Naive thymus-derived CD8-positive, alpha-beta T cell (primary cell): ENCODE measurements at regions of chr3 and their contacts with region 1.

Region 1: GRCh38 chr3:128617557-128618397 is 32.8 kb downstream of the RPN1 start:
- DNase-seq: peak; percentile 97 to 99 (median 99)
- ATAC-seq: peak; percentile 89 to 91
- H3K4me3 Mint-ChIP-seq: peak overlapping the region; percentile 94 to 99 (median 97)
- H3K27ac Mint-ChIP-seq: peak overlapping the region; percentile 93 to 99 (median 97)
- H3K4me1 Mint-ChIP-seq: peaks cover 13 to 32% (median 27%) of the 10 kb centered on the region in 4 donors
- H3K27me3 Mint-ChIP-seq: no peaks in the 10 kb centered on the region

Region 2: DNA sequence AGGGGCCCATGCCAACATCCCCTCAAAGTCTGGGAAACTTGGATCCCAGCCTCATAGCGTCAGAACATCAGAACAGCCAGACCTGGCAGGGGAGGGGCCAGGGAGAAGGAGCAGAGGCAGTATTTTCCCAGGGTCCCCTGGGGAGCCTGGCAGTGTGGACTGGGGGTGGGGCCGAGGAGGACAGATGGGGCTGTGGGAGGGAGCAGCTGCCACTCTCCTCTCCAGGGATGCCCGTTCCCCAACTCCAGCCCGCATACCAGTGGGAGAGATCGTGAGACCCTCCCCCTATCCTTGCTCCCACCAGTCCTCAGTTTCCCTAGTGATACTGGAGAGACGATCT is 144.6 kb before region 1 on chr3:
- POLR2A ChIA-PET with region 1: no interaction called
- DNase-seq: no peak
- ATAC-seq: no peak
- H3K4me3 Mint-ChIP-seq: no peak overlapping the region
- H3K27ac Mint-ChIP-seq: no peak overlapping the region
- H3K4me1 Mint-ChIP-seq: peaks cover 0 to 4% (median 0%) of the 10 kb centered on the region in 4 donors
- H3K27me3 Mint-ChIP-seq: peaks cover 1 to 29% (median 16%) of the 10 kb centered on the region in 5 donors

Region 3: GRCh38 chr3:128590948-128591347 is 26.8 kb before region 1 on chr3:
- POLR2A ChIA-PET with region 1: no interaction called
- DNase-seq: no peak
- ATAC-seq: no peak
- H3K4me3 Mint-ChIP-seq: no peak overlapping the region
- H3K27ac Mint-ChIP-seq: peak overlapping the region in 1 of 10 donors; percentile 37
- H3K4me1 Mint-ChIP-seq: peaks cover 0 to 31% (median 10%) of the 10 kb centered on the region in 4 donors
- H3K27me3 Mint-ChIP-seq: peaks cover 0 to 3% (median 0%) of the 10 kb centered on the region in 5 donors

Region 4: GRCh38 chr3:128650096-128651050 is 32.6 kb after region 1 on chr3 and contains the start of gene RPN1:
- POLR2A ChIA-PET with region 1: interaction called, 13 read pairs
- DNase-seq: peak; percentile 91 to 97 (median 96)
- ATAC-seq: peak; percentile 94 to 95
- H3K4me3 Mint-ChIP-seq: peak within 1 kb of the TSS; percentile 83 to 92 (median 88)
- H3K27ac Mint-ChIP-seq: peak within 1 kb of the TSS; percentile 86 to 93 (median 89)
- H3K4me1 Mint-ChIP-seq: peaks cover 18 to 53% (median 40%) of the 10 kb centered on the region in 4 donors
- H3K27me3 Mint-ChIP-seq: no peaks in the 10 kb centered on the region
- polyA plus RNA-seq, gene RPN1: 178 to 224 (median 179) TPM

Region 5: GRCh38 chr3:128655531-128655930 is 37.8 kb after region 1 on chr3:
- POLR2A ChIA-PET with region 1: interaction called, 13 read pairs
- DNase-seq: no peak
- ATAC-seq: no peak
- H3K4me3 Mint-ChIP-seq: peak overlapping the region in 9 of 10 donors; percentile 50 to 87 (median 58)
- H3K27ac Mint-ChIP-seq: peak overlapping the region in 2 of 10 donors; percentile 48 to 67
- H3K4me1 Mint-ChIP-seq: peaks cover 8 to 20% (median 12%) of the 10 kb centered on the region in 4 donors
- H3K27me3 Mint-ChIP-seq: peaks cover 0 to 1% (median 0%) of the 10 kb centered on the region in 5 donors